ENCODE measurements at regions of chr14 and their contacts with region 1.

Region 1: GRCh38 chr14:71320107-71320733 is 413.0 kb downstream of the PCNX1 start:
- DNase-seq: peak; percentile 96 to 99
- H3K4me3 ChIP-seq: peak within 1 kb of the TSS; percentile 64
- CTCF ChIP-seq: no peak
- POLR2A ChIP-seq: peak in 1 of 2 donors; percentile 69

Region 2: GRCh38 chr14:70897464-70897863 is 422.8 kb before region 1 on chr14:
- intact Hi-C with region 1: no loop called
- DNase-seq: peak in 1 of 2 donors; percentile 46
- H3K4me3 ChIP-seq: no peak overlapping the region
- CTCF ChIP-seq: no peak
- POLR2A ChIP-seq: no peak

Region 3: GRCh38 chr14:71651228-71651627 is 331.0 kb after region 1 on chr14:
- intact Hi-C with region 1: no loop called
- DNase-seq: no peak
- H3K4me3 ChIP-seq: no peak overlapping the region
- CTCF ChIP-seq: no peak
- POLR2A ChIP-seq: no peak

Region 4: DNA sequence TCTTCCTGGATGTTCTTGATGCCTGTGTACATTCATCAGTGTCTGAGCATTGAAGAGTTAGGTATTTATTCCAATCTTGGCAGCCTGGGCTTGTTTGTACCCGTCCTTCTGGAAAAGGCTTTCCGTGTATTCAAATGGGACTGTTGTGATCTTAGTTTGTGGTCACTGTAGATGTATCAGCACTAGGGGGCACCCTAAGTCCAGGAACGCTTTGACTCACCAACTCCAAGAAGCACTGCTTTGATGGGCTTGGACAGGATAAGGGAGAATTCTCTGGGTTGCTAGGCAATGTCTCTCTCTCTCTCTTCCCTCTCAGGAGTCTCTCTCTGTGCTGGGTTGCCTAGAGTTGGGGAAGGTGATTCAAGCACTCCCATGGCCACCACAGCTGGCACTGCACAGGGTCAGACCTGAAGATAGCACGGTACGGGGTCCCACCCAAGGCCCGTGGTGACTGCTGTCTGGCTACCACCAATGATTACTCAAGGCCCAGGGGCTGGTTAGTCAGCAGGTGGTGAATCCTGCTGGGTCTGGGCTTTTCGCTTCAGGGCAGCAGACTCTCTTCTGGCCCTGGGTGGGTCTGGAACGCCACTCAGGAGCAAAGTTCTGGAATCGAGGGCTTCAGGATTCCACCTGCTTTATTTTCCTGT is 400.9 kb after region 1 on chr14:
- intact Hi-C with region 1: loop called (anchors 10 kb)
- DNase-seq: no peak
- H3K4me3 ChIP-seq: no peak overlapping the region
- CTCF ChIP-seq: no peak
- POLR2A ChIP-seq: no peak

Measured in lower leg skin (tissue), 4 donors.